ENCODE measurements at regions of chr13 and their contacts with region 1.

Region 1: GRCh38 chr13:41668130-41668757 is 210.9 kb downstream of the RGCC start:
- DNase-seq: peak; percentile 62
- ATAC-seq: peak; percentile 88
- H3K4me3 Mint-ChIP-seq: no peak overlapping the region
- H3K27ac Mint-ChIP-seq: no peak overlapping the region
- H3K4me1 Mint-ChIP-seq: no peaks in the 10 kb centered on the region
- H3K27me3 Mint-ChIP-seq: no peaks in the 10 kb centered on the region

Region 2: GRCh38 chr13:41150058-41150457 is 518.2 kb before region 1 on chr13:
- CTCF ChIA-PET with region 1: no interaction called
- POLR2A ChIA-PET with region 1: no interaction called
- DNase-seq: no peak
- ATAC-seq: no peak
- H3K4me3 Mint-ChIP-seq: no peak overlapping the region
- H3K27ac Mint-ChIP-seq: no peak overlapping the region
- H3K4me1 Mint-ChIP-seq: no peaks in the 10 kb centered on the region
- H3K27me3 Mint-ChIP-seq: no peaks in the 10 kb centered on the region

Region 3: GRCh38 chr13:41603917-41604316 is 64.3 kb before region 1 on chr13:
- CTCF ChIA-PET with region 1: no interaction called
- POLR2A ChIA-PET with region 1: no interaction called
- DNase-seq: no peak
- ATAC-seq: no peak
- H3K4me3 Mint-ChIP-seq: no peak overlapping the region
- H3K27ac Mint-ChIP-seq: no peak overlapping the region
- H3K4me1 Mint-ChIP-seq: no peaks in the 10 kb centered on the region
- H3K27me3 Mint-ChIP-seq: no peaks in the 10 kb centered on the region

Region 4: GRCh38 chr13:41652727-41653361 is 15.4 kb before region 1 on chr13:
- CTCF ChIA-PET with region 1: interaction called, 23 read pairs
- POLR2A ChIA-PET with region 1: no interaction called
- DNase-seq: peak; percentile 52
- ATAC-seq: no peak
- H3K4me3 Mint-ChIP-seq: no peak overlapping the region
- H3K27ac Mint-ChIP-seq: no peak overlapping the region
- H3K4me1 Mint-ChIP-seq: peaks cover 3% of the 10 kb centered on the region
- H3K27me3 Mint-ChIP-seq: no peaks in the 10 kb centered on the region

Region 5: GRCh38 chr13:41658056-41658661 is 10.1 kb before region 1 on chr13:
- CTCF ChIA-PET with region 1: interaction called, 23 read pairs
- POLR2A ChIA-PET with region 1: no interaction called
- DNase-seq: no peak
- ATAC-seq: no peak
- H3K4me3 Mint-ChIP-seq: no peak overlapping the region
- H3K27ac Mint-ChIP-seq: no peak overlapping the region
- H3K4me1 Mint-ChIP-seq: peaks cover 3% of the 10 kb centered on the region
- H3K27me3 Mint-ChIP-seq: no peaks in the 10 kb centered on the region

Region 6: GRCh38 chr13:41678249-41678648 is 10.0 kb after region 1 on chr13:
- CTCF ChIA-PET with region 1: interaction called, 42 read pairs
- POLR2A ChIA-PET with region 1: no interaction called
- DNase-seq: no peak
- ATAC-seq: no peak
- H3K4me3 Mint-ChIP-seq: no peak overlapping the region
- H3K27ac Mint-ChIP-seq: no peak overlapping the region
- H3K4me1 Mint-ChIP-seq: no peaks in the 10 kb centered on the region
- H3K27me3 Mint-ChIP-seq: no peaks in the 10 kb centered on the region

Region 7: GRCh38 chr13:41935501-41935900 is 267.3 kb after region 1 on chr13:
- CTCF ChIA-PET with region 1: no interaction called
- POLR2A ChIA-PET with region 1: no interaction called
- DNase-seq: no peak
- ATAC-seq: no peak
- H3K4me3 Mint-ChIP-seq: no peak overlapping the region
- H3K27ac Mint-ChIP-seq: no peak overlapping the region
- H3K4me1 Mint-ChIP-seq: peaks cover 12% of the 10 kb centered on the region
- H3K27me3 Mint-ChIP-seq: no peaks in the 10 kb centered on the region

Region 8: GRCh38 chr13:42110410-42111155 is 442.3 kb after region 1 on chr13:
- CTCF ChIA-PET with region 1: interaction called, 52 read pairs
- POLR2A ChIA-PET with region 1: no interaction called
- DNase-seq: peak; percentile 59
- ATAC-seq: peak; percentile 58
- H3K4me3 Mint-ChIP-seq: no peak overlapping the region
- H3K27ac Mint-ChIP-seq: no peak overlapping the region
- H3K4me1 Mint-ChIP-seq: peaks cover 4% of the 10 kb centered on the region
- H3K27me3 Mint-ChIP-seq: no peaks in the 10 kb centered on the region

Region 9: DNA sequence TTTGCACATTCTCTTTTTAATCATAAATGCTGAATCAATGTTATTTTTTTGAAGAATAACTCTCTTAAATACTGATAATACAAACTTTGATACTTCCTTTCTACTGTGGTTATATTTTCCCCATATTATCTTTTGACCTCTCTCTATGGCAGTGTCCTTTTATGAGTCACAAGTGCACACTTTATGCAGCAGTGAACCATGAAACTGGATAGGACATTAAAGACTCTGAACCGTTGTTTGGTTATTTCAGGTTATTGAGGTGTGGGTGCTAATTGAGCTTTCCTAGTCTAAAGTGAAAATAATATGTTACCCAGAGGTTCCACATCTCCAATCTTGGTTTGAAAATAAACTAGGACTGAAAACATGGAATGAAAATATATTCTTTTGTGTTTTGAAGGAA is 451.6 kb after region 1 on chr13:
- CTCF ChIA-PET with region 1: interaction called, 10 read pairs
- POLR2A ChIA-PET with region 1: no interaction called
- DNase-seq: no peak
- ATAC-seq: no peak
- H3K4me3 Mint-ChIP-seq: no peak overlapping the region
- H3K27ac Mint-ChIP-seq: no peak overlapping the region
- H3K4me1 Mint-ChIP-seq: no peaks in the 10 kb centered on the region
- H3K27me3 Mint-ChIP-seq: no peaks in the 10 kb centered on the region

Region 10: GRCh38 chr13:42215578-42216421 is 547.6 kb after region 1 on chr13:
- CTCF ChIA-PET with region 1: interaction called, 14 read pairs
- POLR2A ChIA-PET with region 1: no interaction called
- DNase-seq: peak; percentile 45
- ATAC-seq: peak; percentile 51
- H3K4me3 Mint-ChIP-seq: no peak overlapping the region
- H3K27ac Mint-ChIP-seq: no peak overlapping the region
- H3K4me1 Mint-ChIP-seq: no peaks in the 10 kb centered on the region
- H3K27me3 Mint-ChIP-seq: no peaks in the 10 kb centered on the region

Measured in activated CD8-positive, alpha-beta T cell treated with anti-CD3 and anti-CD28 coated beads, Interleukin-2, amount 10 ng/mL, durations not matched to agents 7 days and 5 days (primary cell).